ENCODE measurements at regions of chr4 and their contacts with region 1.

Region 1: DNA sequence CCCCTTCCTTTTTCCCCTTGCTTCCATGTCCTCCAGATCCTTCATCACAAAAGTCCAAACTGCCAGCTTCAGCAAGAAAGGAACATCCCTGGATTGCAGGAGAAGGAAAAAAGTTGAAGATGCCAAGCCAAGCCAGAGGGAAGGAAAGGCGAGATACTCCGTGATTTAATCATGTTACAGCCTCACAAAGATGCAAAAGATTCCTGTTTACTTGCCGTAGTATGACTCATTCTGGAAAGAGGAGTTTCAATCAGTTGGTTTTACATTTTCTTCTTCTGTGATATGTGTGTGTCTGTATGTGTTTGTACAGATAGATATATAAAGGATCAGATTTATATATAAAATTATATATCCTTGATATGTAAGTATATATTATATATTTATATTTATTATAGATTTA is 69.3 kb downstream of the BTC start:
- DNase-seq: no peak
- ATAC-seq: no peak
- H3K4me3 Mint-ChIP-seq: no peak overlapping the region
- H3K27ac Mint-ChIP-seq: no peak overlapping the region
- H3K4me1 Mint-ChIP-seq: no peaks in the 10 kb centered on the region
- H3K27me3 Mint-ChIP-seq: peaks cover 11% of the 10 kb centered on the region

Region 2: DNA sequence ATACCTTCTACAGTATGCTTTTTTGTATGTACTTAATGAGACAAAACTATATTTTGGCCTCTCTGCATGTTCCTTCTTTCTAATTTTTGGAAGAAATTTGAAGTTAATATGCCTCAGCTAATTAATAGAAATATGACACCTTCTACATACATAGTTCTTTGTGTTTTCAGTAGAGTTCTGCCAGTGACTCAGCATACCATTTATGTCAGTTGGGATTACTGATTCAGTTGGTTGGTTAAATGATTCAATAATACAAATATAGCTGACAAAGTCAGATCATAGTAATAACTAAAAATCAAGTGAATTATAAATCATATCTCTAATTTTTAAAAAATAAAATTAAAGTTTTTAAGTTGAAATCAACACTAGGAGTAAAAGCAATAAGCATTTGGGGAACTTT is 52.6 kb after region 1 on chr4:
- CTCF ChIA-PET with region 1: no interaction called
- POLR2A ChIA-PET with region 1: no interaction called
- intact Hi-C with region 1: loop called in 1 of 2 experiments (anchors 5 kb)
- DNase-seq: no peak
- ATAC-seq: no peak
- H3K4me3 Mint-ChIP-seq: no peak overlapping the region
- H3K27ac Mint-ChIP-seq: no peak overlapping the region
- H3K4me1 Mint-ChIP-seq: no peaks in the 10 kb centered on the region
- H3K27me3 Mint-ChIP-seq: peaks cover 4% of the 10 kb centered on the region